Heart right ventricle (tissue), 16 donors: ENCODE measurements at regions of chr7 and their contacts with region 1.

Region 1: DNA sequence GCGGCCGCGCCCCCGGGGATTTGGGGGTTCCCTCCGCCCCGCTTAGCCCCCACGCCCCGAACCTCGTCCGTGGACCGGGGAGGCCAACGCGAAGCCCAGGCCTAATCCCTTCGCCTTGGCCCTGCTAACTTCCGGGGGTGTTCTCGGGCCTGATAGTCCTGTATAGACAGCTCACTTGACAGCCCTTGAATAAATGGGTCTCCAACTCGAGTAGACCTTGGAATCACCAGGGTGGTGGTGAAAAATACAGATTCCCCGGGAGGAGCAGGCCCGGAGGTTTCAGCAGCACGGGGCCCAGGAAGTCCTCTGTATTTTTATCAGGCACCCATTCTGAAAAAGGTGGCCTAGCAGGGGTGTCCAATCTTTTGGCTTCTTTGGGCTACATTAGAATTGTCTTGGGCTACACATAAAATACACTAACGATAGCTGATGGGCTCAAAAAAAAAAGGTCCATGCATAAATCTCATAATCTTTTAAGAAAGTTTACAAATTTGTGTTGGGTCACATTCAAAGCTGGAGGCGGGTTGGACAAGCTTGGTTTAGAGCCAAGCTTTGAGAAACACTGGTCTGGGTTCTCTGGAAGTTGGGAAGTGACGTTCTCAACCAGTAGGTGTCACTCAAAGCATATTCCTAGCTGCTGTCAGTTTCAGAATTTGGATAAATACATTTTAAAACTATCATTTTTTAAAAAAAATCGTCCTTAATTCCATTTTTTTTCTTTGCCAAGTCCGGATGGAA is 221.7 kb downstream of the PHTF2 start:
- DNase-seq: peak in 1 of 2 donors; percentile 82
- ATAC-seq: peak; percentile 73 to 88 (median 81)
- H3K4me3 ChIP-seq: peak overlapping the region; percentile 22 to 66 (median 60)
- H3K27ac ChIP-seq: peak overlapping the region; percentile 93 to 98 (median 96)
- H3K4me1 ChIP-seq: peaks cover 0 to 48% (median 24%) of the 10 kb centered on the region in 9 donors
- H3K27me3 ChIP-seq: peaks cover 0 to 17% (median 0%) of the 10 kb centered on the region in 7 donors
- CTCF ChIP-seq: peak; percentile 66 to 92 (median 80)

Region 2: DNA sequence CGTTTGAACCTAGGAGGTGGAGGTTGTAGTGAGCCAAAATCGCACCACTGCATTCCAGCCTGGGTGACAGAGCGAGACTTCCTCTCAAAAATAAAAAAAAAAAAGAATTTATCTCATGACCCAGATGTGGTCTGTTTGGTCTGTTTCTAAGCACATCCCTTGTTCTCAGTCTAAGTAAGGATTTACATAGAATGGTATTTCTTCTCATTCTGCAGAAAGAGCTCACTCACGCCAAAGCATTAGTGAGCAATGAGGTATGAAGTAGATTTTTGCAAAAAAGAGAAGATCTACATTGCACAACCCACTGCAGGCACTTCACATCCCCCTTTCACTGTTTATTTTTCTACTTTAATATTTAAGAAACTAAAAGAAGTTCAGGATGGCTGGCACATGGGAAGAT is 744.2 kb before region 1 on chr7:
- intact Hi-C with region 1: loop called in 1 of 10 experiments (anchors 5 kb)
- DNase-seq: no peak
- ATAC-seq: no peak
- H3K4me3 ChIP-seq: no peak overlapping the region
- H3K27ac ChIP-seq: no peak overlapping the region
- H3K4me1 ChIP-seq: peaks cover 0 to 14% (median 0%) of the 10 kb centered on the region in 9 donors
- H3K27me3 ChIP-seq: no peaks in the 10 kb centered on the region
- CTCF ChIP-seq: no peak

Region 3: GRCh38 chr7:78226059-78226719 is 205.9 kb after region 1 on chr7:
- intact Hi-C with region 1: loop called in 2 of 10 experiments (anchors 10 kb)
- DNase-seq: peak; percentile 18 to 26
- ATAC-seq: no peak
- H3K4me3 ChIP-seq: no peak overlapping the region
- H3K27ac ChIP-seq: no peak overlapping the region
- H3K4me1 ChIP-seq: peaks cover 0 to 10% (median 0%) of the 10 kb centered on the region in 9 donors
- H3K27me3 ChIP-seq: no peaks in the 10 kb centered on the region
- CTCF ChIP-seq: peak in 8 of 9 donors; percentile 24 to 52 (median 36)

Region 4: GRCh38 chr7:78437118-78437517 is 416.8 kb after region 1 on chr7:
- intact Hi-C with region 1: no loop called
- DNase-seq: no peak
- ATAC-seq: no peak
- H3K4me3 ChIP-seq: no peak overlapping the region
- H3K27ac ChIP-seq: no peak overlapping the region
- H3K4me1 ChIP-seq: no peaks in the 10 kb centered on the region
- H3K27me3 ChIP-seq: no peaks in the 10 kb centered on the region
- CTCF ChIP-seq: no peak